ENCODE measurements at regions of chr6 and their contacts with region 1.

Region 1: DNA sequence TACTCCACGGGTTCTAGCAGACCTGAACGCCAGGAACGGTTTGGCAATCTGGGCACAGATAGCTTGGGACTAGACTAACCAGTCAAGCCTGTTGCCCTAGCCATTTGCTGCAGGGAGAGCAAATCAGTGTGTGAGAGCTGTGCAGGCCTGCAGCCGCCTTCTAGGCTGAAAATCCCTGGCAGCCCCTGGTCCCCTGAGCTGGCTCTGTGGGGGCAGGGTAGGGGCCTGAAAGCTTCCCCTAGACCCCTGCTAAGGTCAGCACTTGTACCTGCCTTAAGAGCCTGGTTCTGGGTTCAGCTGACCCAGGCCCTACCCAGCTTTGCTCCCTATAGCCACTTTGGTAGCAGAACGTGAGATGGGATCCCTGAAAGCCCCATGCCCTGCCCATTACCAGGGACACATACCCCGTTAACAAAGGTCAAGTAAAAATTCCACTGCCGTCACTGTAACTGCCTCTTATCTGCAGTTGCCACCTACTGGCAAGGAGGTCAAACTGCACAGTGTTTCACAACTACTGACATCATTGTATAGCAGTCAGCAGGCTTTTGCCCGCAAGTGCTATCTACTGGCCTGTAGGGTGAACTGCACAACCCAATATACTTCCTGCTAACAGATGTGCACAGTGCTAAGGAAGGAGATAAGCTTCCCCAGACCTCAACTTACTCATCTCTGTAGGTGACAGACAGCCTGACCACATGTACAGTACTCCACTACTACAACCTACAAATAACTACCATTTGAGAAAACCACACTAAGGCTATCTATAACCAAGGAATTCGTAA is 95.1 kb upstream of the OLIG3 start:
- DNase-seq: peak; percentile 74
- H3K4me3 Mint-ChIP-seq: no peak overlapping the region
- H3K27ac Mint-ChIP-seq: no peak overlapping the region
- H3K4me1 Mint-ChIP-seq: peaks cover 7% of the 10 kb centered on the region
- H3K27me3 Mint-ChIP-seq: peaks cover 2% of the 10 kb centered on the region

Region 2: GRCh38 chr6:137271245-137272183 is 317.7 kb before region 1 on chr6:
- CTCF ChIA-PET with region 1: interaction called, 11 read pairs
- intact Hi-C with region 1: loop called (anchors 1 kb)
- DNase-seq: no peak
- H3K4me3 Mint-ChIP-seq: no peak overlapping the region
- H3K27ac Mint-ChIP-seq: no peak overlapping the region
- H3K4me1 Mint-ChIP-seq: no peaks in the 10 kb centered on the region
- H3K27me3 Mint-ChIP-seq: peaks cover 9% of the 10 kb centered on the region

Region 3: DNA sequence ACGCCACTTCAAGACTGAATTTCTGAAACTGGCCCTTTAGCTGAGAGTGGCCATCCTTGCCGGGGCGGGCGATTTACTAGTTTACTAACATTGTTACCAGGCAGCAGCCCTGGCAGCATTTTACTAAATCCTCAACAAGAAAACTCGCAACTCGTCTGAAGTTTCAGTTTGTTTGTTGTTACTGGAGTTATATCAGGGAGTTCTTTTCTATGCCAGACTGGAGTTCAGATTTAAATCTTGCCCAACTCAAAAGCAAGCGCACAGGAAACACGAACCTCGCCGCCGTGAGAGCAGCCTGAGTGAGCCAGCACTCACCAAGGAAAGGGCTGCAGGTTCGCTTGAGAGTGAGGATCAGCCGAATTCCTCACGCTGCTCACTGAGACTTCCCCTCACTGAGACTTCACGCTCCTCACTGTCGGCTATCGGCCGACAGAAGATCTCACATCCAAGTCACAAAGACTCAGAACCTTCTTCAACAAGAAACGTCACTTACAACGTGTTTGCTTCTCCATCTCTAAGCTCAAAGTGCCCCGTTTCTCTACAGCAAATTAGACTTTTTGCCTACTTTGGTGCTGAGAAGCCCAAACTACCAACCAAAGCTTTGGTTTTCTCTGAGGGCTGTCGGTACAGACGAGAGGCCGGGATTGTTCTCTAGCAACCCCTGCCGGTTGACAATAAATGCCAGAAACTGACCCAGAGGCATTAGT is 174.0 kb before region 1 on chr6:
- CTCF ChIA-PET with region 1: interaction called, 11 read pairs
- intact Hi-C with region 1: loop called (anchors 1 kb)
- DNase-seq: peak; percentile 80
- H3K4me3 Mint-ChIP-seq: peak overlapping the region; percentile 65
- H3K27ac Mint-ChIP-seq: no peak overlapping the region
- H3K4me1 Mint-ChIP-seq: peaks cover 11% of the 10 kb centered on the region
- H3K27me3 Mint-ChIP-seq: no peaks in the 10 kb centered on the region

Region 4: DNA sequence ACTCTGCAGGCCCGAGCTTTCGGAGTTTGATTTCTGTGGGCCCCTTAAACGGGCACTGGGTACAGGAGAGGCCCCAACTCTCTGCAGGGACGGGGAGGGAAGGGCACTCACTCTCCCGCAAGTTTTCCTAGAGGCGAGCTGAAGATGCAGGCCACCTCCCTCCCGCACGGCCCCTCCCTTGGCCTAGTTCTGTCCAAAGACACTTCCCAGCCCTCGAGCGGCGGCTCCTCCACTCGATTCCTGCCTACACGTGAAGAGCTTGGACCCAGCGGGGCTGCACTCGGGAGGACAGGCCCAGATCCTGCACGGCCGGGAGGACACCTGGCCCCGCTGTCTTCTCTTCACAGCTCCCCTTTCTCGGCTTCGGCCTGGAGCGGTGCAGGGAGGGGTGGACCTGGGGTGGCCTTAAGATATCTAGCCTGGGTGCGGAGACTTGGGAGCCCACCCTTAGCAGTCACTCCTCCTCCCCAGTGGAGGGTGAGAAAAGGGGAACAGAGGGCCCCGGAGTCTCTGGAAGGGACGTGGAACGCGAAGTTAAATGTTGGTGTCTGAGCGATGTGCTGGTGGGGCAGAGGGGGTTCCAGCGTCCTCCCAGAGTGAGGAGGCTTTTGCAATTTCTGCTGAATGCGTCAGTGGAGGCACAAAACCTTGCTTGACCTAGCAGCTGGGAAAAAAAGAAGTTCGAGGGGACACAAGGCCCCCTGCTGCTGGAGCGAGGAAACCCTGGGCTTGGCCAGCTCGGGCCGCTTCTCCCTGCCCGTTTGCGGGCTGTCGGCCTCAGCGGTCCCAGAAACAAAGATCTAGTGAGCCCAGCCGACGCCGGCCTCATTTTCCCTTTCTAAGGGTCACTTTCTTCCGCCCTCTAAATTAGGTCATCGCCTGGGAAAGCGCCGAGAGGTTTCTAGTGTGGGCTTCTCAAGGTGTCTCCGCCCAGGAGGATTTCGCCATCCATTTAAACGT is 99.9 kb before region 1 on chr6:
- CTCF ChIA-PET with region 1: interaction called, 10 read pairs
- intact Hi-C with region 1: loop called (anchors 2 kb)
- DNase-seq: no peak
- H3K4me3 Mint-ChIP-seq: peak overlapping the region; percentile 25
- H3K27ac Mint-ChIP-seq: no peak overlapping the region
- H3K4me1 Mint-ChIP-seq: peaks cover 49% of the 10 kb centered on the region
- H3K27me3 Mint-ChIP-seq: peaks cover 86% of the 10 kb centered on the region

Region 5: DNA sequence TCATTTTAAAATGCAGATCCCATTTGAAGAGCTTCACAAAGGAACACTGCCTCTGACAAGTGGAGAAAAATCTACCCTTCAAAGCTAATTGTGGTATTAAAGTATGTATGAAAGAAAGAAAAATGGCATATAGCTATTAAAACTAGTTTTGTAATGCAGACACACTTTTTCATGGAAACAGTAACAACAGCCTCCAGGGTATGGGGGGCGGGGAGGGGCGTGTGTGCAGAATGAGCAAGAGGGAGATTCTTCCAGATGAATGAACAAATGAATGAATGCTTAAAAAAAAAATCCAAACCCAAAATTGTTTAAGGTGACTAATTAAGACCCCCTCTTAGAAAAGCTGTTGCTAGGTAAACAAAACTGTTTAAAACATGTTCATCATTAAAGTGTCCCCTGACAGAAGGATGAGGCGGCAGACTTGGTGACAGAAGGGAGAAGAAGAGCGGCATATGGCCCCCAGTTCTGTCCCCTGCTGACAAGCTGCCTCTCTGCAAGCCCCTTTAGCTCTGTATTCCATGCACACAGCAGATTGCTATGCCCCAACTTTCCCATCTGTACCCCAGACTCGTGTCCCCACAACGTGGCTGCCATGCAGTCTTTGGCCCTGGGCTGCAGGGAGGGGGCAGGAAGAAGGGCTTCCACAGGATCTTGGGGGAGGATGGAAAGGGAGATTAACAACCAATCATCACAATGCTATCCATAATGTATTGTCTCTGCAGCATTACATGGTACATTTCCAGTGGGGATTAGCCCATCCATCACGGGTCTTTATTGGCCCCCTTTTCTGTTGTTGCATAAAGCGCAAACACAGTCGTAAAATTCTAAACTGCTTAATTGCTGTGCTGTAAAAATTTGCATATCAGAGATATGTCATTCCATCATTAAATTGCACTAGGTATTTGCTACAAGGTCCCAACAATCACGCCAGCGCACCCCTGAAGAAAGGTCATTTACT is 13.3 kb after region 1 on chr6:
- CTCF ChIA-PET with region 1: interaction called, 16 read pairs
- intact Hi-C with region 1: no loop called
- DNase-seq: no peak
- H3K4me3 Mint-ChIP-seq: no peak overlapping the region
- H3K27ac Mint-ChIP-seq: no peak overlapping the region
- H3K4me1 Mint-ChIP-seq: no peaks in the 10 kb centered on the region
- H3K27me3 Mint-ChIP-seq: peaks cover 5% of the 10 kb centered on the region

Region 6: DNA sequence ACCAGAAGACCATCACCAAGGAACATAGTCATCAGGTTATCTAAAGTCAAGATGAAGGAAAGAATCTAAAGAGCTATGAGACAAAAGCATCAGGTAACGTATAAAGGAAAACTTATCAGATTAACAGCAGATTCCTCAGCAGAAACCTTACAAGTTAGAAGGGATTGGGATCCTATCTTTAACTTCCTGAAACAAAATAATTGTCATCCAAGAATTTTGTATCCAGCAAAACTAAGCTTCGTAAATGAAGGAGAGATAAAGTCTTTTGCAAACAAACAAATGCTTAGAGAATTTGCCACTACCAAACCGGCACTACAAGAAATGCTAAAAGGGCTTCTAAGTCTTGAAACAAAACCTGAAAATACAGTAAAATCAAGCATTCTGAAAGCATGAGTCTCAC is 1616.6 kb after region 1 on chr6:
- CTCF ChIA-PET with region 1: no interaction called
- intact Hi-C with region 1: no loop called
- DNase-seq: no peak
- H3K4me3 Mint-ChIP-seq: no peak overlapping the region
- H3K27ac Mint-ChIP-seq: no peak overlapping the region
- H3K4me1 Mint-ChIP-seq: peaks cover 18% of the 10 kb centered on the region
- H3K27me3 Mint-ChIP-seq: no peaks in the 10 kb centered on the region

Measured in activated naive CD4-positive, alpha-beta T cell treated with anti-CD3 and anti-CD28 coated beads for 36 hours (primary cell).